A549 (cell line): ENCODE measurements at regions of chr19 and their contacts with region 1.

Region 1: DNA sequence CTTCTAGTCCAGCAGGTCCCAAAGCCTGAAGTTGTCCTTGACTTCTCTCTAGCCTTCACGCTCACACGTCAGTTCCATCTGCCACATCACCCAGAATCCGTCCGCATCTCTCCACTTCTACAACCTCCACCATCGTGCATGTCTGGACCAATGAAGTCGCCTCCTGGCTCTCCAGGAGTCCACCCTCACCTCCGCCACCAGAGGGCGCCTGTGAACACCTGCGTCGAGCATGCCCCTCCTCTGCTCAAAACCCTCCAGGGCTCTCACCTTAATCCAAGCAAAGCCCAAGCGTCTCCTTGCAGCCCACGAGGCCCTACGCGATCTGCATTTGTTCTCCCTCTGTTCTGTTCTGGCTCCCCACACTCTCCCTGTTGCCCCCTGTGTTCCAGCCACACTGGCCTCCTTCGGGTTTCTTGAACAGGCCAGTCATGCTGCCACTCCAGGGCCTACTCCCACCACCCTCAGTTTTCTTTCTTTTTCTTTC is 3.7 kb downstream of the USHBP1 start:
- DNase-seq: peak; percentile 87 to 89
- ATAC-seq: peak; percentile 99
- H3K4me3 ChIP-seq: no peak overlapping the region
- H3K27ac ChIP-seq: peak overlapping the region; percentile 47 to 75; a peak in 3 of 6 replicates
- H3K4me1 ChIP-seq: no peaks in the 10 kb centered on the region
- CTCF ChIP-seq: peak; percentile 75
- EP300 ChIP-seq: no peak
- POLR2A ChIP-seq: no peak
- RAD21 ChIP-seq: peak; percentile 55 to 63

Region 2: DNA sequence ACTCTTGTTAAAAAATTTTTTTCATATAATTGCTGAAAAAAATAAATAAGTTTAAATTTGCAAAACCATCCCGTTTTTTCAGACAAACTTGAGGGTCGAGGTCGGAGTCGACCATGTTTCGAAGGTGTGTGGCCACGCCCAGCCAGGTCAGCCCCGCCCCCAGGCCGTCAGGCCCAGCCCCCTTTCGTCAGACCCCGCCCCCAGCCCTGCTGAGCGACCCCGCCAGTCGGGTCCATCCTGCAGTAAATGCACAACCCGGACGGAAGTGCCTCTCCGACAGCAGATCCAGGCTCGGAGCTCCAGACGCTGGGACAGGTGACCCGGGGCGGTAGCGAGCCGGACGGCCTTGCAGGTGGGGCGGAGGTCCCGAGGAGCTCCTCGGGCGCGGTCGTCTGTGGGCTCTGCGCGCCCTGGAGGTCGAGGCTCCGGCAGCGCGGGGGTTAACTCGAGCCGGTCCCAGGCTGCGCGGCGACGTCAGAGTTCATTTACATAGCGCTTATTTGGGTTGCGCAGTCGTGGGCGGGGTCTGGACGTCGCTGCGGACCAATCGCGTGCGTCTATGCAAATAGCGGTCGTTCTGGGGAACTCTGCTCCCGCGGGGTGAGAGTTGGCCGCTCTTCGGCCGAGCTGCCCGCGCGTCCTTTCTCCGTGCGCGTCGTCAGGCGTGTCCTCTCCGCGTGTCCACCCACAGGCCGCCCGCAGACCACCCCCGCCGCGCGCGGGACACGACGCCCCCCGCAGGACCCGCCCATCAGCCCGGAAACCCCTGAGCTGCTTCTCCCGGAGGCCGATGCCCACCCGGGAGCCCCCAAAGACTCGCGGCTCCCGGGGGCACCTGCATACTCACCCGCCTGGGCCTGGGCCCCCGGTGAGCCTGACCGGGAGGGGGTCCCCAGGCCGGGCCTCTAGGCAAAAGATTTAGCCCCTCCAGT is 34.6 kb before region 1 on chr19 and contains the start of gene OCEL1:
- CTCF ChIA-PET with region 1: interaction called, 11 read pairs
- POLR2A ChIA-PET with region 1: no interaction called
- DNase-seq: peak; percentile 80 to 97
- ATAC-seq: peak; percentile 93 to 94
- H3K4me3 ChIP-seq: peak within 1 kb of the TSS; percentile 64
- H3K27ac ChIP-seq: peak within 1 kb of the TSS; percentile 83 to 92
- H3K4me1 ChIP-seq: peaks cover 9% of the 10 kb centered on the region; the same call in 1 of the 3 replicates
- CTCF ChIP-seq: no peak
- EP300 ChIP-seq: no peak
- POLR2A ChIP-seq: peak; percentile 43
- RAD21 ChIP-seq: no peak
- polyA plus RNA-seq, gene OCEL1: 5.5 and 8.5 TPM in 2 replicates

Region 3: DNA sequence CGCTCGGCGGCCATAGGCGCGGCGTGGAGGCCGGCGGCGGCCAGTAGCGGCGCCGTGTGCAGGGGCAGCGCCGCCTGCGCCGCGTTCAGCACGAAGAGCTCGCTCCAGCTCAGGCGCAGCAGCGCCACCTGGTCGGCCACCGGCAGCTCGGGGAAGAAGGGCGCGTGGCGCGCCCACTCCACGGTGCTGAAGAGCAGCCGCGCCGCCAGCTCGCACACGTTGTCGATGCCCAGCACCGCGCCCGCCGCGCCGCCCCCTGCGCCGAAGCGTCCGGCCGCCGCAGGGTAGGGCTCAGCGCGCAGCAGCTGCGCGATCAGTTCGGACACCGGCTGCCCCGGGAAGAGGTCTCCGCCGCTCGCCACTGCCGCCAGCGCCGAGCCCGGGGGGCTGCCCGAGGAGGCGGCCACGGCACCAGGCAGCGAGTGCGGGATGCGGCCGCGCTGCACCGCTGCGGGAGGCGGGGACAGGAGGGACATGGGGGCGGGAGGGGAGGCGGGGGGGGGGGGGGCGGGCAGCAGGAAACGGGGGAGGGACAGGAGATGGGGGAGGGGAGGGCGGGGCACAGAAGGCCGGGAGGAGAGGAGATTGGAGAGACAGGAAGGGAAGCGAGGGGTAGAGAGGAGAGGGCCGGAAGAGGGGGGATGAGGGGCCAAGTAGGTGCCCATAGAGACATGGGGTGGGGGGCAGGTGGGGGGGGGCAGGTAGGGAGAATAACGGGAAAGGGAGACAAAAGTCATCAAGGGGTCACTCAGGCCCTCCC is 25.1 kb before region 1 on chr19:
- CTCF ChIA-PET with region 1: interaction called, 62 read pairs
- POLR2A ChIA-PET with region 1: no interaction called
- DNase-seq: peak in 1 of 2 experiments; percentile 88
- ATAC-seq: peak; percentile 59 to 79
- H3K4me3 ChIP-seq: peak overlapping the region; percentile 88
- H3K27ac ChIP-seq: peak overlapping the region; percentile 99 to 100
- H3K4me1 ChIP-seq: peaks cover 60% of the 10 kb centered on the region
- CTCF ChIP-seq: peak; percentile 48
- EP300 ChIP-seq: no peak
- POLR2A ChIP-seq: peak; percentile 34
- RAD21 ChIP-seq: peak; percentile 22 to 29; a peak in 2 of 5 replicates

Region 4: GRCh38 chr19:17246681-17247425 is 14.0 kb before region 1 on chr19:
- CTCF ChIA-PET with region 1: interaction called, 62 read pairs
- POLR2A ChIA-PET with region 1: no interaction called
- DNase-seq: peak in 1 of 2 experiments; percentile 68
- ATAC-seq: peak; percentile 20 to 51; a peak in 4 of 6 replicates
- H3K4me3 ChIP-seq: peak overlapping the region; percentile 93
- H3K27ac ChIP-seq: peak overlapping the region; percentile 92 to 96
- H3K4me1 ChIP-seq: peaks cover 53% of the 10 kb centered on the region
- CTCF ChIP-seq: no peak
- EP300 ChIP-seq: no peak
- POLR2A ChIP-seq: no peak; the same call in 1 of the 2 replicates
- RAD21 ChIP-seq: no peak

Region 5: DNA sequence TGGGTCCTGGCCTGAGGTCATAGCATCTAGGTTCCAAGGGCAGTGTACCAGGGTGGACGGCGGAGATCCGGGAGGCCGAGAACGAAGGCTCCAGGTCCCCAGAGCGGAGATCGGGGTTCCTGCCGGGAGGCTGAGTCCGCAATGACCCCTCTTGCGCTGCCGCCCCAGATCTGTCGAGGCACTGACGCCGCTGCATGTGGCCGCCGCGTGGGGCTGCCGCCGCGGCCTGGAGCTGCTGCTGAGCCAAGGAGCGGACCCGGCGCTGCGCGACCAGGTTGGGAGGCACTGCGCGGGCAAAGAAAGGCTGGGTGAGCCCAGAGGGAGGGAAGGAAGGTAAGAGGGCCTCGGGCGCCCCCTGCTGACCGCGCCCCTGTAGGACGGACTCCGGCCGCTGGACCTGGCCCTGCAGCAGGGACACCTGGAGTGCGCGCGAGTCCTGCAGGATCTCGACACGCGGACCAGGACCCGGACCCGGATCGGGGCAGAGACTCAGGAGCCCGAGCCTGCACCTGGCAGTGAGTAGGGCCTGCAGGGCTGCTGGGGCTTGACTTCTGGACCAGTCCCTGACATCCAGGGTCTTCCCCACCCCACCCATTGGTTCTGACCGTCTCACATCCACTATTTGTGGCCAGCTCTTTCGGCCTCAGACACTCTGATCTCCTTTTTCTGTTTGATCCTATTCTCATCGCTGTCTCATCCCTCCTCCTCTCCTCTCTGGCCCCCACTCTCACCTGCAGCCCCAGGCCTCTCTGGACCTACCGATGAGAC is 21.8 kb after region 1 on chr19:
- CTCF ChIA-PET with region 1: interaction called, 77 read pairs
- POLR2A ChIA-PET with region 1: no interaction called
- DNase-seq: peak; percentile 64 to 83
- ATAC-seq: peak; percentile 92 to 98
- H3K4me3 ChIP-seq: 0 out of 3 replicates have a peak overlapping the region, but pooled peaks have one; percentile 19
- H3K27ac ChIP-seq: peak overlapping the region; percentile 58 to 76; a peak in 3 of 6 replicates
- H3K4me1 ChIP-seq: no peaks in the 10 kb centered on the region
- CTCF ChIP-seq: peak; percentile 73
- EP300 ChIP-seq: no peak
- POLR2A ChIP-seq: no peak
- RAD21 ChIP-seq: peak; percentile 84

Region 6: DNA sequence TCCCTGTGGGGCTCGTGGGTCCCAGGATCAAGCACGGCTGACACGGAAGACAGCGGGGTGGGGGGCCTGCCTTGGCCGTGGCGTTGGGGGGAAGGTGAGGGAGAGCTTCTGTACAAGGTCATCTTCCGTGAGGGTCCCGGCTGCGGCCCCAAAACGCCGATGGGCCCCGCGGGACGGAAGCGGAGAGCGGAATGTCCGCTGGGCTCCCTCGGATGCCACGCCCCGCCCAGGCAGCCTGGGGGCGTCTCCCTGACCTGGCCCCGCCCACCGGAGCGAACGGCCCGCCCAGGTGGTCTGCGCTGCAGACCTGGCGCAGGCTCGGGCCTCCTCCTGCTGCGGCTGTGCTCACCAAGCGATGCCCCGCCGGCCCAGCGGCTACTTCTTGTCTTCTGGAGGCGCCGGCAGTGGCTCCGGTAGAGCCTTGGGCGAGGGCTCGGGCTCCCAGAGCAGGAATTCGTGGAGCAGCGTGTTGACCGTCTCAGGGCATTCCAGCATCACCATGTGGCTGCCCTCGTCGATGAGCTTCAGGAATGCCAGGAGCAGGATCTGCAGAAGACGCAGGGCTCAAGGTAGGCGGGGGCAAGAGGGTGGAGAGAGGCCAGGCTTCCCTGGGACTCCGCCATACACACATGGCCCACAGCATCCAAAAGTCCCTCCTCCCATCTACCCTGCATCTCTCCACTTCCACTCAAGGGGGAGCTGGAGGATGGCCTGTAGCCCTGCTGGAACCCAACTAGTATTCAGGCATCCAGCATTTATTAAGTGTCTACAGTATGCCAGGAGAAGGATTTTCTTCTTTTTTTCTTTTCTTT is 31.6 kb after region 1 on chr19:
- CTCF ChIA-PET with region 1: interaction called, 10 read pairs
- POLR2A ChIA-PET with region 1: no interaction called
- DNase-seq: peak; percentile 92 to 94
- ATAC-seq: peak; percentile 93 to 94
- H3K4me3 ChIP-seq: peak overlapping the region; percentile 67
- H3K27ac ChIP-seq: peak overlapping the region; percentile 87 to 89
- H3K4me1 ChIP-seq: peaks cover 23% of the 10 kb centered on the region; the same call in 2 of the 3 replicates
- CTCF ChIP-seq: peak; percentile 55
- EP300 ChIP-seq: no peak
- POLR2A ChIP-seq: peak; percentile 59
- RAD21 ChIP-seq: peak; percentile 64 to 82